ENCODE measurements at regions of chr9 and their contacts with region 1.

Region 1: DNA sequence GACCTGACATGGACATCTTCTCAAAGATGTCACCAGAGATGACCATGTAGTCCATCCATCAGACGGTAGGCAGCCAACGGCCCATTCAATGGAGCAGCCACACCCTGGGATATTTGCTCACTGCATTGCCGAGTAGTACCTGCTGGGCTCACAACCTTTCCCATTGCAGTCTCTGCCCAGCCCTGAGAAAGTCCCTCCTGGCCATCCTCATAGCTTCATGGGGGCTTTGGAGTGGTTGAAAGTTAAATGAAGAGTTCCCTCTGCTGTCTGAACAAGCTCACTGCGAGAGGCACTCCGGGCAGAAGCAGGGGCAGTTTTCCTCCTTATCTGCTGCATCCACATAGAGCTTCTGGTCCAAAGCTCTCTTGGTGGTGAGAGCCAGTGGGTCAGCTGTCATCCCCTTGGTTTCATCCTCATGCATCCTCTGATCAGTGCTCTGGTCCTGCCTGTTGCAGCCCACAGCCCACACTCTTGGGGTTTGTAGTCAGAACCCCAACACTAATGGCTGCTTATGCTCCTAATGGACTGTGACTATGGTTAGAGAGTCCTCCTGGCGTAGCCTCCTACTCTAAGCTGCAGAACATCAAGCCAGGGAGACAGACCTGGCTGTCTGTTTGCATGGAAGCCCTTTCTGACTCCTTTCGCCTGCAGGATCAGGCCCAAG is 23.4 kb downstream of the TNFSF8 start:
- DNase-seq: no peak
- ATAC-seq: peak in 2 of 8 donors; percentile 17 to 37
- H3K4me3 ChIP-seq: no peak overlapping the region
- H3K27ac ChIP-seq: peak overlapping the region in 1 of 10 donors; percentile 29
- H3K4me1 ChIP-seq: peaks cover 0 to 23% (median 0%) of the 10 kb centered on the region in 9 donors
- H3K27me3 ChIP-seq: peaks cover 0 to 14% (median 5%) of the 10 kb centered on the region in 7 donors
- CTCF ChIP-seq: peak in 7 of 9 donors; percentile 18 to 65 (median 42)

Region 2: DNA sequence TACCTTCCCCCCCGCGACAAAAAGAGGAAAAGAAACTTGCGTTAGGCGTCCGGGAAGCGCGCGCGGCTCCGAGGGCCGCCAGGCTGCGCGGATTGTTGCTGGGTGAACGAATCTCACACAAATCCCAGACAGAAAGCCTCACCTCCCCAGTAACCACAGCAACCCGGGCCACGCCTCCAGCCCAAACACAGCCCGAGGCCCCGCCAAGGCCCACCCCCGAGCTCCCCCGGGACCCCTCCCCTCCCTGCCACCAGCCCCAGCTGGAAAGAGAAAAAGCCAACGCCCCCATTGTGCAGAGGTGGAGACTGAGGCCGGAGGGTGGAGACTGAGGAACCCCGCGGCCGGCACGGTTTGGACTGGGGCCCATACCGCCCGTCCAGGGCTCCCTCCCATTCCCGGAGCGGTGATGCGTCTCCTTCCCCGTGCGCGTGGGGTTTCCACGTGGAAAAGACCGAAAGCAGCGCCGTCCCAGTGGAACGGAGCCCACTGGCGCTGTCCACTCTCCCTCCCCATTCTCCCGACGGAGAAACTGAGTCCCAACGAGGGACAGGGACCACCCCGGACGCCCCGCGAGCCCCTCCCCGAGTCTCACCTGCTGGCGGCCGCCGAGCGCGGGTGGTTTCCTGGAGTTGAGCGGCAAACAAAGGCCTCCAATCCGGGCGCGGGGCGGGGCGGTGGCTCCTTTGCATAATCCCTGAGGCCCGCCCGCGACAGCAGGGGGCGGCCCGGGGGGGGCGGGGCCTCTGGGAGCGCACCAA is 509.0 kb before region 1 on chr9:
- intact Hi-C with region 1: loop called in 8 of 10 experiments (anchors 5 to 10 kb)
- DNase-seq: peak; percentile 96
- ATAC-seq: peak; percentile 94 to 97 (median 96)
- H3K4me3 ChIP-seq: peak overlapping the region; percentile 48 to 91 (median 78)
- H3K27ac ChIP-seq: peak overlapping the region; percentile 36 to 90 (median 79)
- H3K4me1 ChIP-seq: peaks cover 3 to 46% (median 25%) of the 10 kb centered on the region in 9 donors
- H3K27me3 ChIP-seq: no peaks in the 10 kb centered on the region
- CTCF ChIP-seq: peak in 3 of 9 donors; percentile 17 to 36 (median 17)

Region 3: DNA sequence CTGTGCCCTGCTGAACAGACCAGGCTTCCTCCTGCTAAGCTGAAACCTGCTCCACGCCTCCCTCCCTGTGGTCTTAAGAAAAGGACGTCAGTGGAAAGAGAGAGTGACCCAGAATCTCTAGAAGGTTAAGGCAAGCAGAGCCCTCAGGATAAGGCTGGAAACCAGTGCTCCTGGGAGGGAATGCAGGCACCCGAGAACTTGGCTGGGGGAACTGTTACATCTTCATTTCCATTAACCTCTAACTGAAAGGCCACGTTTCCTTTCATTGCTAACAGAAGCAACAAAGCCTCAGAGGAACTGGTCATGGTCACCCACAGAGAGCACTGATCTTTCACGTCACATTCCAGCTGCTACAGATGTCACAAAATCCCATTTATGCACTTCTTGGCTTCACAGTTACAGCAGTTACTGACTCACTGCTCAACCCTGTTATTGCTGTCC is 493.2 kb before region 1 on chr9:
- intact Hi-C with region 1: loop called in 9 of 10 experiments (anchors 10 kb)
- DNase-seq: no peak
- ATAC-seq: peak in 4 of 8 donors; percentile 16 to 46 (median 23)
- H3K4me3 ChIP-seq: no peak overlapping the region
- H3K27ac ChIP-seq: peak overlapping the region in 1 of 10 donors; percentile 12
- H3K4me1 ChIP-seq: peaks cover 0 to 13% (median 0%) of the 10 kb centered on the region in 9 donors
- H3K27me3 ChIP-seq: no peaks in the 10 kb centered on the region
- CTCF ChIP-seq: no peak

Region 4: DNA sequence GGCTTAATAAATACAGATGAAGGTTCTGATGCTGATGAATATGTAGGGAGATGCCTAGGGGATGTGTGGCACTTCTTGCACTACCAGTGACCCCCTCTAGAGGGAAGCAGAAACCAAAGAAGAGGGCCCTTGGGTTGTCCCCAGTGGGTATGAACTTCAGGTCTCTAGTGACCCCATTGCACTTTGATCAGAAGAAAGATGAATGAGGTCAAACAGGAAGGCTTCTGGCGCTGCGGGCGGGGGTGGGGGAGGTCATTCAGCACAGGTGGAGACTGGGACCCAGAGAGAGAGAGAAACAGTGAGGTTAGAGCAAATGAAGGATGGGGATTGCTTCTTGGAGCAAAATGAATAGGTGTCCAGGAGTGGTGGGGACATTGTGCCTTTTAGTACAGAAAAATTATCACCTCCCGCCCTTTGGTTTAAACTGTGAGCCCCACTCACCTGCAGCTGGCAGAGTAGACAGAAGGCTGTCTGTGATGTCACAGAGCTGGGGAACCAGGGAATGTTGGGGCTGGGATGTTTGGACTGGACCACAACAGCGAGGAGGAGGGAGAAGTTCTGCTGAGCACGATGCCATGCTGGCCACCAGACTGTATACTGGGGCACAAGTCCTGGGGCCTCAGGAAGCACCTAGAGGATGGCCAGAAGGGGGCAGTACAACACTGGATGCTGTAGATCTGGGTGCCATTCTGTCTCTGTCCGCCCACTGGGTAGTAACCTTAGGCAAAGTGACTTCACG is 225.3 kb before region 1 on chr9 and contains the start of gene TEX48:
- intact Hi-C with region 1: loop called in 3 of 10 experiments (anchors 5 to 10 kb)
- DNase-seq: peak in 1 of 2 donors; percentile 39
- ATAC-seq: peak in 5 of 8 donors; percentile 46 to 71 (median 53)
- H3K4me3 ChIP-seq: no peak within 1 kb of the TSS
- H3K27ac ChIP-seq: no peak within 1 kb of the TSS
- H3K4me1 ChIP-seq: peaks cover 0 to 7% (median 0%) of the 10 kb centered on the region in 9 donors
- H3K27me3 ChIP-seq: peaks cover 0 to 36% (median 15%) of the 10 kb centered on the region in 7 donors
- CTCF ChIP-seq: peak; percentile 23 to 65 (median 51)
- total RNA-seq, gene TEX48: not detected

Region 5: DNA sequence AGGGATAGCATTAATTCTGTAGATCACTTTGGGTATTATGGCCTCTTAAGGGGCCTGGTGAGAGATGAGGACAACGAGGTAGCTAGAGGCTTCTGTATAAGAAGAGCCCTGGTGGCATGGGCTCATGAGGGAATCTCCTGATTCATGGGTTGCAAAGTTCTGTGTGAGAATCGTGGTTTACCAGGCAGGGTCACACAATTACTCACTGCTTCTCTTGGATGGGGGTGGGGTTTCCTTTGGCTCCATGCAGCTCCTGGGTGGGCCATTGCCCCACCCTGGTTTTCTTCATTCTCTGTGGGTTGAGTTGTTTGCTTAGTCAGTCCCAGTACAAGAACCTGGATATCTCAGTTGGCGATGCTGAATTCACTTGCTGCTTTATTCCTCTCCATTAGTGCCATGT is 70.3 kb before region 1 on chr9:
- intact Hi-C with region 1: no loop called
- DNase-seq: no peak
- ATAC-seq: no peak
- H3K4me3 ChIP-seq: no peak overlapping the region
- H3K27ac ChIP-seq: no peak overlapping the region
- H3K4me1 ChIP-seq: no peaks in the 10 kb centered on the region
- H3K27me3 ChIP-seq: peaks cover 0 to 11% (median 0%) of the 10 kb centered on the region in 7 donors
- CTCF ChIP-seq: no peak

Region 6: DNA sequence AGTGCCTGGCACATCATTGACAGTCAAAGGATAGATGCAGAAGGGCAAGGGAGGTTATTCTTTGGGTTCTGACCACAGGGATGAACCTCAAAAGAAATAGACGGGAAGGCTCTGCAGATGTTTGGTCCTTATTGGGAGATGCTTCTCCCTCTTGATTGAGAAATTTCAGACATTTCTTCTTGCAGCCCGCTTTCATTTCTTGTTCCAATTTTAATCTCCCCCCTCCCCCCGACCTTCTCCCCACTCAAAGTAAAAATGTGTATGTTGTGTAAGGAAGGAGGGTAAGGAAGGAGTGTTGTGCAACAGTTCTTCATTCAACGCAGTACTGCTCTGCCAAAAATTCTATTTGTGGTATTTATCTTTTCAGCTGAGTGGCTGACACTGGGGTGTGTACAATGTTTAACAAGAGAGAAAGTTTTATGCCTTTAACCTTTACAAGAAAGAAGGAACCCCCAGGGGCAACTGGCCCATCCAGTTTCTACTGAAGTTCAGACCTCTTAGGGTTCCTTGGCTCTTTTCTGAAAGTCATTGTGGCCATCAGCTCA is 54.9 kb before region 1 on chr9:
- intact Hi-C with region 1: no loop called
- DNase-seq: no peak
- ATAC-seq: peak in 3 of 8 donors; percentile 33 to 77 (median 38)
- H3K4me3 ChIP-seq: no peak overlapping the region
- H3K27ac ChIP-seq: no peak overlapping the region
- H3K4me1 ChIP-seq: peaks cover 0 to 23% (median 0%) of the 10 kb centered on the region in 9 donors
- H3K27me3 ChIP-seq: no peaks in the 10 kb centered on the region
- CTCF ChIP-seq: no peak

Region 7: GRCh38 chr9:115013998-115014397 is 107.0 kb after region 1 on chr9:
- intact Hi-C with region 1: loop called in 6 of 10 experiments (anchors 1 to 5 kb)
- DNase-seq: peak; percentile 55 to 68
- ATAC-seq: peak in 7 of 8 donors; percentile 58 to 84 (median 80)
- H3K4me3 ChIP-seq: no peak overlapping the region
- H3K27ac ChIP-seq: no peak overlapping the region
- H3K4me1 ChIP-seq: peaks cover 0 to 15% (median 0%) of the 10 kb centered on the region in 9 donors
- H3K27me3 ChIP-seq: peaks cover 0 to 34% (median 15%) of the 10 kb centered on the region in 7 donors
- CTCF ChIP-seq: peak; percentile 60 to 84 (median 79)

Measured in heart right ventricle (tissue), 16 donors.